ENCODE measurements at regions of chr15 and their contacts with region 1.

Region 1: GRCh38 chr15:72117486-72118399 is at the start of gene MYO9A:
- DNase-seq: peak; percentile 98 to 99 (median 98)
- H3K4me3 ChIP-seq: peak within 1 kb of the TSS; percentile 78 to 87 (median 86)
- H3K4me3 Mint-ChIP-seq: peak within 1 kb of the TSS; percentile 95 to 99
- H3K27ac ChIP-seq: peak within 1 kb of the TSS; percentile 91 to 97
- H3K27ac Mint-ChIP-seq: peak within 1 kb of the TSS; percentile 98 to 100 (median 100)
- H3K4me1 ChIP-seq: peaks cover 16 to 25% of the 10 kb centered on the region in 2 donors
- H3K4me1 Mint-ChIP-seq: peaks cover 24% of the 10 kb centered on the region
- H3K27me3 ChIP-seq: no peaks in the 10 kb centered on the region
- H3K27me3 Mint-ChIP-seq: peaks cover 3% of the 10 kb centered on the region in 3 donors
- CTCF ChIP-seq: no peak
- polyA plus RNA-seq, gene MYO9A: 3.9 to 6.6 (median 5.0) TPM

Region 2: GRCh38 chr15:72272213-72273002 is 154.7 kb after region 1 on chr15 and contains the start of gene PARP6:
- intact Hi-C with region 1: loop called in 1 of 2 experiments (anchors 2 kb)
- DNase-seq: peak; percentile 98 to 100 (median 99)
- H3K4me3 ChIP-seq: peak within 1 kb of the TSS; percentile 59 to 81 (median 63)
- H3K4me3 Mint-ChIP-seq: peak within 1 kb of the TSS; percentile 85 to 92
- H3K27ac ChIP-seq: peak within 1 kb of the TSS; percentile 46 to 90
- H3K27ac Mint-ChIP-seq: peak within 1 kb of the TSS; percentile 83 to 93 (median 88)
- H3K4me1 ChIP-seq: peaks cover 15 to 20% of the 10 kb centered on the region in 2 donors
- H3K4me1 Mint-ChIP-seq: peaks cover 27% of the 10 kb centered on the region
- H3K27me3 ChIP-seq: no peaks in the 10 kb centered on the region
- H3K27me3 Mint-ChIP-seq: peaks cover 2 to 7% (median 5%) of the 10 kb centered on the region in 3 donors
- CTCF ChIP-seq: peak; percentile 78
- polyA plus RNA-seq, gene PARP6: 12.9 to 165 (median 13.5) TPM